ENCODE measurements at regions of chr14 and their contacts with region 1.

Region 1: GRCh38 chr14:91911474-91912032 is 35.9 kb downstream of the FBLN5 start:
- DNase-seq: no peak
- ATAC-seq: peak; percentile 75

Region 2: DNA sequence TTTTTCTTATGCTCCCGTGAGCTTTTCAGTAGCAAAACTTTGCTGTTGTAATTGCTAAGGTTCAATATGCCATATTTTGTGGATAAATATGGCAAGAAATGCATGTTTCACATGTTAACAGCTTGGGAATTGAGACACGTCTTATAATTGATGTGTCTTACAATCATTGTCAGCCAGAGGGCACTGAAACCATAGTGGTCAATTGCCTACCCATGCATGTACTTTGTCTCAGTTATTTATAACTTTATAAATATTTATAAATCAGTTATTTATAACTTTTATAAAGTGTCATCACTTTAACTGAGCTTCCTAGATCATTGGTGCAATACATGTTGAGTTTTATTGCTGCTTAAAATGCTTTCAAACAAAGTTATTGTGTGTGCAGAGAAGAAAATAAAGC is 261.6 kb before region 1 on chr14:
- intact Hi-C with region 1: loop called (anchors 5 kb)
- DNase-seq: no peak
- ATAC-seq: no peak

Region 3: GRCh38 chr14:91980127-91980741 is 68.7 kb after region 1 on chr14:
- intact Hi-C with region 1: no loop called
- DNase-seq: no peak
- ATAC-seq: peak; percentile 39

Measured in Right ventricle myocardium superior (tissue), 1 donor.